Posterior vena cava (tissue), 2 donors: ENCODE measurements at regions of chr11 and their contacts with region 1.

Region 1: GRCh38 chr11:100855466-100856067 is 168.5 kb downstream of the ARHGAP42 start:
- DNase-seq: no peak

Region 2: DNA sequence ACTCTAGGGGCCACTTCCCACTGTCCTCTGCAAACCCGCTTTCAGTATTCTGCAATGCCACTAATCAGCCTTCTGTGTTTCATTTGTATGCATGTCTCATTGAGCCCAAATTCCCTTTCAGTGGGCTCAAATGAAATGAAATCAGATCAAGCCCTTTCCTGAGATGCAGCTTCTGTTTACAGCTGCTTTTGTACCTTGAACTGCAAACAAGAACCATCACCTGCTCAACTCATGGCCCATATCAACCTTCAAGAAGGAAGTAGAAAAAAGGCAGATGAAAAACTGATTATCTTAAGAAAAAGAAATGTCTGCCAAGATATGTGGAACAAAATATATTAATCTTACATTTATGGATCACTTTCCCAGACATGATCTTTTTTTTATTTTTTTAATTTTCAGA is 309.6 kb before region 1 on chr11:
- intact Hi-C with region 1: no loop called
- DNase-seq: no peak

Region 3: DNA sequence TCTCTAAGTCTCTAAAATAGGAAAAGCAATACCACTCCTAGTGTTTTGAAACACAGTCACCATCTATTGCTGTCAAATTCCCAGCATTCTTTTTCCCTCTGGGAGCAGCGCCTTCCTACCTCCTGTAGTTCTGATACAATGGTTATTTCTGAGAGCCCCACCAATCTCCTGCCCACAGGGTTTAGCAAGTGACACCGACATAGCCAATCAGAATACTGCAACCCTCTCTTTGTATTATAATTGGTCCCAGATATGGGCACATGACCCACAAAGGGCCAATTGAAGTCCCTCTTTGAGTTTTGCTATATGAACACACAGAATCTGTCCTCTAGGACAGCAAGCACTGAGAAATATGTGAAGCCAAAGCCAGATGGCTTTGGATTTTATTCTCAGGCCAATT is 185.4 kb before region 1 on chr11:
- intact Hi-C with region 1: no loop called
- DNase-seq: no peak

Region 4: DNA sequence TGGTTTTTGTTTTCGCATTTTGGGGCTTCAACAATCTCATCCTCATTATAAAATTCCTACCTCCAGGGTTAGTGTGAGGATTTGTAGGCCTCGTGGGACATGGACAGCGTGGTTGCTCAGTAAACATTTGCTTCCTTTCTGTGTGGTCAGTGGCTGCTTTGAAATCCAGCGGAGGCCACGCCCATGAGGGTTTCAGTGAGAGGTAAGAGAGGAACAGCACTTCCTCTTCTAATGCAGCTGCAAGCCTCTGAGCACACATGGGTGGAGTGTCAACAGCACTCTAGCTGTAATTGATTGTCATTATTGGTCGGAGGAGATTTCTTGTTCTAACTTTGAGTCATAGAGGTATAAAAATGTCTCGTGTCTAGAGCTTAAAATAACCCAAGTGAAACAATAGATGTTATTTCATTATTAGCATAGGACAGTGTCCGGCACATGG is 174.5 kb before region 1 on chr11:
- intact Hi-C with region 1: loop called in 1 of 2 experiments (anchors 5 kb)
- DNase-seq: no peak